Vagina (tissue), 2 donors: ENCODE measurements at regions of chr3 and their contacts with region 1.

Region 1: GRCh38 chr3:9731206-9732079 is at the start of gene BRPF1:
- DNase-seq: peak; percentile 98 to 99
- H3K4me3 ChIP-seq: peak within 1 kb of the TSS; percentile 65 to 87
- H3K27ac ChIP-seq: peak within 1 kb of the TSS; percentile 94
- H3K4me1 ChIP-seq: peaks cover 30% of the 10 kb centered on the region
- H3K27me3 ChIP-seq: no peaks in the 10 kb centered on the region
- CTCF ChIP-seq: peak in 1 of 3 experiments; percentile 15
- POLR2A ChIP-seq: no peak
- total RNA-seq, gene BRPF1: 16.9 TPM

Region 2: DNA sequence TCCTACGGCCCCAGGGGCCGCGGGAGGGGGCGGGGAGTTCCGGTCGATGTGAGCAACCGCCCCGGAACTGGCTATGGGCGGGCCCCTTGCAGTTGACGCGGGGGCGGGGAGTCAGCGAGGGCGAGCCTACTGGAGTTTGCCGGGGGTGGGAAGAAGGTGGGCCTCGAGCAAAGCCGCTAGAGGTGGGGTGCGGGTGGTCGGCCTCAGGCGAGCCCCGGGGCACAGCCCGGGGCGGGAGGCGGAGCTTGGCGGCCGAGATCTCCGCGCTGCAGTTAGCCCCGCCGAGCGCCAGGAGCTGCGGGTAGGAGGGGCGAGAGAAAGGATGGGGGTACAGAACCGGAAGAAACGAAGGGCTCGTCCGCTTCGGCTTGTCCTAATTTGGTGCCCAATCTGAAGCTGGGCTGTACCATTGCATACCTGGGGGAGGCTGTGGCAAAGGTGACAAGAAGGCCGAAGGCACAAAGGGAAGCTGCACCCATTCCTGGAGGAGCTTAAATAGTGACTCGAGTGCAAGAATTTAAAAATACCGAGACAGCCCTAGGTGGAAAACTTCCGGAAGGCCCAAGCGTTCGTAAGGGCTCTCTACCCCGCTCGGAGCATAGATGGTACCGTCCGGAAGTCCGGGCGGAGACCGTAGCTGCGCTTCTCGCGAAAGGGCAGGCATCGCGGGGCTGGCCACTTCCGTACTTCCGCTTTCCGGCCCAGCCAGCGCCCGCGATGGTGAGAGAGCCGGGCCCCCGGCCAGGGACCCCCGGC is 61.1 kb after region 1 on chr3 and contains the starts of genes ARPC4 and TADA3:
- intact Hi-C with region 1: loop called (anchors 10 kb)
- DNase-seq: no peak
- H3K4me3 ChIP-seq: peak within 1 kb of the TSS; percentile 85 to 90
- H3K27ac ChIP-seq: peak within 1 kb of the TSS; percentile 95
- H3K4me1 ChIP-seq: peaks cover 44% of the 10 kb centered on the region
- H3K27me3 ChIP-seq: no peaks in the 10 kb centered on the region
- CTCF ChIP-seq: no peak
- POLR2A ChIP-seq: peak in 1 of 2 donors; percentile 50
- total RNA-seq, gene ARPC4: 124 TPM
- total RNA-seq, gene TADA3: 58.9 TPM

Region 3: GRCh38 chr3:9884555-9885165 is 153.2 kb after region 1 on chr3:
- intact Hi-C with region 1: no loop called
- DNase-seq: no peak
- H3K4me3 ChIP-seq: no peak overlapping the region
- H3K27ac ChIP-seq: peak overlapping the region; percentile 72
- H3K4me1 ChIP-seq: peaks cover 30% of the 10 kb centered on the region
- H3K27me3 ChIP-seq: no peaks in the 10 kb centered on the region
- CTCF ChIP-seq: no peak
- POLR2A ChIP-seq: no peak